B cell (primary cell): ENCODE measurements at regions of chr1 and their contacts with region 1.

Region 1: DNA sequence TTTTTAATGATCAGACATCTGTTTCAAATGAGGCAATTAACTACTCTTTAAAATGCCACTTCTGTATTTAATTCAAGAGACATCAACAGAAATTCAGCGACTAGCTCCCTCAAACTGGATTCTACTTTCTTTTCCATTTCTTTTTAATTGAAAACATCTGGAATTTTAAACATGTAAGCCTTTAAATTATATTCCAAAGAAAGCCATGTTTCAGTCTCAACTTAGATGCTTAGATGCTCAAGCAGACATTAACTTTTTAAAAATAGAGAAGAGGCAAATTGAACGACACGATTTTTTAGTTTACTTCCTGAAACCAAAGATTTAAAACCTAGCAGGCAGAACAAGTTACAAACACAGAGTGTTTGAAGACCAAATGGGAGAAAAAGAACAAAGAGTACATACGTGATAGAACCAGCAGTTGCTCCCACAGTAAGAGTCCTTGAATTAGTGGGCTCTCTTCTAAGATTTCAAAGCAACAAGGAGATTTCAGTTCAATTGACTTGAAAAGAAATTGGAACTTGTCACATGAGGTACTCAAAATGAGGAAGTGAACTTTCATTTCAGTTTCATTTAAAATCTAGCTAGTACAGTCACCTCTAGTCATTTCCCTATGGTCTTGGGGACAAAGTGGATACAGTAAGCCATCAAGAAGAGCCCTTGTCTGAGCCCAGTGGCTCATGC is at the start of gene CTSS:
- DNase-seq: peak; percentile 86
- ATAC-seq: peak; percentile 87
- H3K4me3 ChIP-seq: peak within 1 kb of the TSS; percentile 62 to 99 (median 80)
- H3K4me3 Mint-ChIP-seq: peak within 1 kb of the TSS; percentile 96
- H3K27ac ChIP-seq: peak within 1 kb of the TSS; percentile 85 to 97
- H3K27ac Mint-ChIP-seq: peak within 1 kb of the TSS; percentile 97
- H3K4me1 ChIP-seq: peaks cover 36 to 40% of the 10 kb centered on the region in 2 donors
- H3K4me1 Mint-ChIP-seq: peaks cover 45% of the 10 kb centered on the region
- H3K27me3 ChIP-seq: no peaks in the 10 kb centered on the region
- H3K27me3 Mint-ChIP-seq: no peaks in the 10 kb centered on the region
- CTCF ChIP-seq: no peak
- total RNA-seq, gene CTSS: 221 and 241 TPM in 2 replicates

Region 2: DNA sequence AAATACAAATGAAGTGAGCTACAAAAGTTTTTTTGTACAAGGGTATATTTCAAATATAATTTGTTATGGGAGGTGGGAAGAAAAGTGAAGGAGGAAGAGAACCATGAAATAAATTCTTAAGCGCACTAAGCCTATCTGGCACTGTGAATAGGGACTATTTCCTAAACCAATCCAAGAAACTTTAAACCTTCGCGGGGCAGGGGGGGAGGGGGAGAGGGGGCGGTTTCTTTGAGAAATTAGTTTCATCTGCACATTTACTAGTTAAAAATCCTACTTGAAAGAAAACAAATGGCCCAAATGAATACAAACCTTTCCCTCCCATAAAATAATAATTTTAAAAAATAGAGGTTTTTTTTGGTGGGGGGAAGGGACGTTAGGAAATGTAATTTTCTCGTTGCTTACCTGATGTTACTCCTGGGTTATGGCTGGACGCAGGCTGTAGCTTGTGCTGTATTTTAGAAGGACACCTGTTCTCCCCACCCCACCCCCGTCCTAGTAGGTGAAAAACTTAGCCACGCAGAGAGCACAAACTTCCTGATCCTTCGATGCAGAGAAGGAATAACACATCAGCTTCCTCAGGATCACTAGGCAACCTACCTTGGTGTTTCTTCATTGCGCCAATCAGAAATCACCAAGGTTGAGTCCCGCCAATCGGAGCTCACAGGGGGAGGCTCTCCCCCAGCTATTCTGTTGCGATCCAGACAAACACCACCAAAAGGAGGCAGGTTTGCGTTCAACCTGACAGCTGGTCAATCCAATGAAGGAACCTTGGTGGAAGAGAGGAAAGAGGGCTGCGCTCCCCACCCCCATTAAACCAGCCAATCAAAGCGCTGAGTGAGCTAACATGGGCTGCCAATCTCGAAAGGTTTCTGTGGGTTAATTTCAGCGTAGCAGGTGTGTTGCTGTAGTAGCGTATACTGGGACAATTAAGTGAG is 68.6 kb before region 1 on chr1 and contains the start of gene GOLPH3L:
- CTCF ChIA-PET with region 1: no interaction called
- POLR2A ChIA-PET with region 1: no interaction called
- intact Hi-C with region 1: loop called (anchors 1 kb)
- DNase-seq: peak; percentile 93
- ATAC-seq: peak; percentile 99
- H3K4me3 ChIP-seq: peak within 1 kb of the TSS; percentile 77 to 99 (median 90)
- H3K4me3 Mint-ChIP-seq: peak within 1 kb of the TSS; percentile 100
- H3K27ac ChIP-seq: peak within 1 kb of the TSS; percentile 66 to 78
- H3K27ac Mint-ChIP-seq: peak within 1 kb of the TSS; percentile 97
- H3K4me1 ChIP-seq: peaks cover 4 to 11% of the 10 kb centered on the region in 2 donors
- H3K4me1 Mint-ChIP-seq: peaks cover 19% of the 10 kb centered on the region
- H3K27me3 ChIP-seq: no peaks in the 10 kb centered on the region
- H3K27me3 Mint-ChIP-seq: no peaks in the 10 kb centered on the region
- CTCF ChIP-seq: no peak
- total RNA-seq, gene GOLPH3L: 22.1 and 25.3 TPM in 2 replicates

Region 3: GRCh38 chr1:150813058-150813707 is 47.7 kb after region 1 on chr1:
- CTCF ChIA-PET with region 1: interaction called, 4 read pairs
- POLR2A ChIA-PET with region 1: no interaction called
- intact Hi-C with region 1: loop called (anchors 5 kb)
- DNase-seq: peak; percentile 30
- ATAC-seq: no peak
- H3K4me3 ChIP-seq: no peak overlapping the region
- H3K4me3 Mint-ChIP-seq: no peak overlapping the region
- H3K27ac ChIP-seq: peak overlapping the region in 1 of 2 donors; percentile 11
- H3K27ac Mint-ChIP-seq: no peak overlapping the region
- H3K4me1 ChIP-seq: no peaks in the 10 kb centered on the region
- H3K4me1 Mint-ChIP-seq: peaks cover 1% of the 10 kb centered on the region
- H3K27me3 ChIP-seq: no peaks in the 10 kb centered on the region
- H3K27me3 Mint-ChIP-seq: no peaks in the 10 kb centered on the region
- CTCF ChIP-seq: no peak

Region 4: DNA sequence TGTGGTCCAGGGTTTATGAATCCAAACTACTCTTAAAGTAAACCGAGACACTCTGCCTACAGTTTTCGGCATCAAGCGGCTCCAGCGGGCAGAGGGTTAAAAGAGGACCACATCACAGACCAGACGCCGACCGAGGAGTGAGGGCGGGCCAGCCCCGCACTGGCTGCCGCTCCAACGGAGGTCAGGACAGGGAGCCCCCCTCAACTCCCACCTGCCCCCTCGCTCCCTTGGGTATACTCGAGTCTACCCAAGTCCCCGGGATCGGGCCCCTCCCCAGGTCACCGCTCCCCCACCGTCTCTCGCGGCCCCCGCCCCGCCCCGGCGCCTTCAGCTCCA is 110.7 kb after region 1 on chr1:
- CTCF ChIA-PET with region 1: no interaction called
- POLR2A ChIA-PET with region 1: no interaction called
- intact Hi-C with region 1: loop called (anchors 1 kb)
- DNase-seq: no peak
- ATAC-seq: no peak
- H3K4me3 ChIP-seq: peak overlapping the region; percentile 72 to 87 (median 84)
- H3K4me3 Mint-ChIP-seq: peak overlapping the region; percentile 88
- H3K27ac ChIP-seq: peak overlapping the region; percentile 64 to 80
- H3K27ac Mint-ChIP-seq: peak overlapping the region; percentile 90
- H3K4me1 ChIP-seq: peaks cover 20% of the 10 kb centered on the region in 2 donors
- H3K4me1 Mint-ChIP-seq: peaks cover 32% of the 10 kb centered on the region
- H3K27me3 ChIP-seq: no peaks in the 10 kb centered on the region
- H3K27me3 Mint-ChIP-seq: no peaks in the 10 kb centered on the region
- CTCF ChIP-seq: no peak